Activated T-helper 2 cell treated with anti-CD3 and anti-CD28 coated beads, Interferon-gamma antibody, Interleukin-2, Interleukin-4, amounts not matched to agents 10 μg/mL and 5 μg/mL and 100 μg/mL, durations not matched to agents 14 hours and 24 hours and 36 hours (primary cell): ENCODE measurements at regions of chr15 and their contacts with region 1.

Region 1: GRCh38 chr15:83559310-83559966 is 94.5 kb upstream of the ADAMTSL3 start:
- DNase-seq: peak; percentile 19
- H3K4me3 Mint-ChIP-seq: no peak overlapping the region
- H3K27ac Mint-ChIP-seq: no peak overlapping the region
- H3K4me1 Mint-ChIP-seq: no peaks in the 10 kb centered on the region
- H3K27me3 Mint-ChIP-seq: no peaks in the 10 kb centered on the region

Region 2: GRCh38 chr15:83248151-83249029 is 311.0 kb before region 1 on chr15:
- intact Hi-C with region 1: loop called (anchors 5 kb)
- DNase-seq: no peak
- H3K4me3 Mint-ChIP-seq: no peak overlapping the region
- H3K27ac Mint-ChIP-seq: no peak overlapping the region
- H3K4me1 Mint-ChIP-seq: no peaks in the 10 kb centered on the region
- H3K27me3 Mint-ChIP-seq: peaks cover 30% of the 10 kb centered on the region

Region 3: DNA sequence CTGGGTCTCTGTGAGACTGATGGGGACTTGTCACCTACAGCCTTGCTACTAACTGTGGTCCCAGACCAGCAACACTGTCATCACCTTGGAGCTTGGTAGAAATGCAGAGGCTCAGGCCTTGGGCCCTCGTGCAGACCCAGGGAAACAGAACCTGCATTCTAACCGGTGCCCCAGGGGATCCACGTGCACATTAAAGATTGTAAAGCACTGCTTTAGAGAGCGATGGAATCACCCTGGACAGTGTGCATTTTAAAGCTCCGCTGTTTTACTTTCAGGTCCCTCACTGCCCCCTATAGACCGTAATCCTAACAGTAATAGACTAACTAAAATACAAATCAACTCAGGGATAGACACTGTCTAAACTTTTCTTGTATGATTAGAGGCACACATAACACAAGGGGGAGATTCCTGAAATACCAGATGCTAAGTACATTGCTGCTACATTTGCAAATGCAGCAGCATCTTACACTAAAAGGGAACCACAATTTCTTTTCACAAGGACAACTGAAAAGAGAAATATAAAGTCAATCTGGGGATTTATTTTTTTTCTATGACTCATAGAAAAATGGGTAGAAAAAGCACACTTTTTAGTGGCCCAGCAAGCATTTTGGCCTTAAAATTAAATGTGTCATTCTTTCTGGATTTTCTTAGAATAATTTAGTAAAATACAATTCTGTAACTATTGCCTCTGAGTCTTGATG is 122.8 kb before region 1 on chr15:
- intact Hi-C with region 1: loop called (anchors 1 kb)
- DNase-seq: no peak
- H3K4me3 Mint-ChIP-seq: no peak overlapping the region
- H3K27ac Mint-ChIP-seq: no peak overlapping the region
- H3K4me1 Mint-ChIP-seq: no peaks in the 10 kb centered on the region
- H3K27me3 Mint-ChIP-seq: peaks cover 5% of the 10 kb centered on the region